WTC11 (cell line): ENCODE measurements at regions of chr5 and their contacts with region 1.

Region 1: GRCh38 chr5:180670586-180671359 is 21.4 kb upstream of the FLT4 start:
- DNase-seq: peak; percentile 63
- ATAC-seq: peak; percentile 53
- H3K4me3 Mint-ChIP-seq: no peak overlapping the region
- H3K27ac Mint-ChIP-seq: no peak overlapping the region
- H3K4me1 Mint-ChIP-seq: peaks cover 12% of the 10 kb centered on the region
- H3K27me3 Mint-ChIP-seq: peaks cover 44% of the 10 kb centered on the region
- CTCF ChIP-seq: peak; percentile 49

Region 2: DNA sequence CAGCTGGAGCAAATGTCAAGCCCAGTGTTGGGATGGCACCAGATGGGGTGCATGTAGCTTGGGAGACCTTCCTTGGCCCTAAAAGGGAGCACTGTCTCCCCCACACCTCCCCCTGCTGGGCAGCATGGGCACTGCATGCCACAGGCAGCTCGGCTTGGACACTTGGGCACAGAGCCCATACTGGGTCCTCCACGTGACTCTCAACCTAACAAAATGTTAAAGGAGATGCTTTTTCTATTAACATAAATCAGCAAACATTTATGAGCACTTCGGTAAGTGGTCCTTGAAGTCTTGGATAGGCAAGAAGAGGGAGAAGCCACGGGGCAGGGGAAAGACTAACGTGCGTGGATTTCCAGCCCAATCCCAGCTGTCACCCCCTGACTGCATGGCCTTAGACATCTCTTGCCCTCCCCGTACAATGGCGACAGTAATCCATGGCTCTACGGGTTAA is 355.0 kb before region 1 on chr5:
- CTCF ChIA-PET with region 1: no interaction called
- POLR2A ChIA-PET with region 1: no interaction called
- DNase-seq: peak; percentile 81
- ATAC-seq: peak; percentile 58
- H3K4me3 Mint-ChIP-seq: peak overlapping the region; percentile 20; the same call in 1 of the 2 replicates
- H3K27ac Mint-ChIP-seq: 0 out of 2 replicates have a peak overlapping the region, but pooled peaks have one; percentile 76
- H3K4me1 Mint-ChIP-seq: peaks cover 21% of the 10 kb centered on the region
- H3K27me3 Mint-ChIP-seq: no peaks in the 10 kb centered on the region
- CTCF ChIP-seq: peak; percentile 93

Region 3: DNA sequence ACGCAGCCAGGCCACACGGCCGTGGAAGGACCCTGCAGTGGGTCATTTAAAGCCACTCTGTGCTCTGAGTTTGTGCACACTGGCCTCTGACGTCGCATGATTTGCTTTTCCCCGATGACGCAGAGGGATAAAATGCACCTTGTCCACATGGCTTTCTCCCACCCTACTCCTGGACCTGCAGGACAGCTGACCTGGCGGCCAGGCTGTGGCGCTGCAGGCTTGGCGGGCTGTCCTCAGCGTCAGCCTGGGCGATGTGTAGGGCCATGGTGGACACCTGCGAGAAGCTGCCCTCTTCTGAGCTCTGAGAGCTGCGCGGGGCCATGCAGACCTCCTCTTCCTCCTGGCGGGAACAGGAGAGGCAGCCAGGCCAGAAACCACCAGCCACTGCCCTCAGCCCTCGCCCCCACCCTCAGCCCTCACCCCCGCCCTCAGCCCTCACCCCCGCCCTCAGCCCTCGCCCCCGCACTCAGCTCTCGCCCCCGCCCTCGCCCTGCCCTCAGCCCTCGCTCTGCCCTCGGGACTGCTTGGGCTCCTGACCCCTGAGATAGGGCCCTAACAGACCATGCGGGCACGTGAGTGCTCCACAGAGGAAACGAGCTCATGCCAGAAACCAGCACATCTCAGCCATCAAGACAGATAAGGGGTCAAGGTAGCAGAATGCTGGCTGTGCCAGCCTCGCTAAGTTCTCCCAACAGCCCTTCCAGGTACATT is 59.5 kb before region 1 on chr5:
- CTCF ChIA-PET with region 1: interaction called, 10 read pairs
- POLR2A ChIA-PET with region 1: no interaction called
- DNase-seq: peak; percentile 50
- ATAC-seq: peak; percentile 65
- H3K4me3 Mint-ChIP-seq: no peak overlapping the region
- H3K27ac Mint-ChIP-seq: no peak overlapping the region
- H3K4me1 Mint-ChIP-seq: no peaks in the 10 kb centered on the region
- H3K27me3 Mint-ChIP-seq: peaks cover 2% of the 10 kb centered on the region; the same call in 1 of the 2 replicates
- CTCF ChIP-seq: no peak

Region 4: DNA sequence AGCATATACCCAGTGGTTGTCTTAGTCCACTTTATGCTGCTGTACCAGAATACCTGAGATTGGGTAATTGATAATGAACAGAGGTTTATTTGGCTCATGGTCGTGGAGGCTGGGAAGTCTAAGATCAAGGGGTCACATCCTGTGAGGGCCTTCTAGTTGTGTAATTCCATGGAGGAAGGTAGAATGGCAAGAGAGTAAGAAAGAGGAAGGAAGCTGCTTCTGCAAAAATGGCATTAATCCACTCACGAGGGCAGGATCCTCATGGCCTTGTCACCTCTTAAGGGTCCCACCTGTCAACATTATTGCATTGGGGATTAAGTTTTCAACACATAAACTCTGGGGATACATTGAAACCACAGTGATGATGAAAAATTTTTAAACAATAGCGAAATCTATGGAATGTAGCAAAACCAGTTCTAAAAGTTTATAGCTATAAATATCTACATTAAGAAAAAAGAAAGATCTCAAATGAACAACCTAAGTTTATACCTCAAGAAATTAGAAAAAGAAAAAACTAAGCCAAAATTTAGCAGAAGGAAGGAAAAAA is 245.2 kb after region 1 on chr5:
- CTCF ChIA-PET with region 1: no interaction called
- POLR2A ChIA-PET with region 1: no interaction called
- DNase-seq: no peak
- ATAC-seq: no peak
- H3K4me3 Mint-ChIP-seq: no peak overlapping the region
- H3K27ac Mint-ChIP-seq: no peak overlapping the region
- H3K4me1 Mint-ChIP-seq: peaks cover 21% of the 10 kb centered on the region
- H3K27me3 Mint-ChIP-seq: no peaks in the 10 kb centered on the region
- CTCF ChIP-seq: no peak